AG04449 (cell line): ENCODE measurements at regions of chr2 and their contacts with region 1.

Region 1: DNA sequence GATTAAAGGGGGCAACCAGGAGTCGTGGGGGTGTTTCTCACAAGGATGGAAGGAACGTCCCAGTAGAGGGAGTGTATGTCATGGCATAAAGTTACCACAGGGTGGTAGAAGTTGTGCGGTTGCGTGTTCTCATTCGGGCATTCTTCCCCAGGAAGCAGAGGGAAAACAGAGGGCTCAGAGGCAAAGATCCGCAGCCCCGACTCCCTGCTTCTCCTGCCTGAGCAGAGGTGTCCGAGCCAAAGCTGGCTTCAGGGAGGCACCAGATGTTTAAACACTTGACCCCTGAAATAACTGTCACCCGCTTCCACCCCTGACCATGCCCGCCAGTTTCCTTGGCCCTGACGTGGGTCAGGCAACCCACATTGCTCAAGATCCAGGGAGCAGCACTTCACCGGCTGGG is 83.7 kb downstream of the EN1 start:
- DNase-seq: no peak
- H3K4me3 ChIP-seq: no peak overlapping the region; the same call in 1 of the 2 replicates
- CTCF ChIP-seq: peak; percentile 67

Region 2: DNA sequence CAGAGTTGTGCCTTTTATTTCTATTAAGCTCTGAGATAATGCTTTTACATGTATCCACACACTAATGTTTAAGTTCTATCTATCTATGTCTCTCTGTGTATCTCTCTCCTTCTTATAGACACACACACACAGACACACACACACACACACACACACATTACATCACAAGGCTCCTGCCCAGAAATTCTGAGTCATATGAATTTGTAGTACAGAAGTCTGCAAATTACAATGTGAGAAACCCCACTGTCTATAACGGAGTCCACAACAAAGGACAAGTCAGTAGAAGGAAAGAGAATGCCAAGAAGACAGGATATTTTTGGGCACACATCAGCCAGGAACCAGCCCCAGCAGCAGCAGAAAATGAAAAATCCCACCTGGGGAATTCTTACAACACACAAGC is 58.8 kb before region 1 on chr2:
- CTCF ChIA-PET with region 1: no interaction called
- POLR2A ChIA-PET with region 1: no interaction called
- DNase-seq: peak; percentile 60
- H3K4me3 ChIP-seq: no peak overlapping the region
- CTCF ChIP-seq: no peak

Region 3: GRCh38 chr2:118750959-118751565 is 12.7 kb before region 1 on chr2:
- CTCF ChIA-PET with region 1: interaction called, 34 read pairs
- POLR2A ChIA-PET with region 1: no interaction called
- DNase-seq: no peak
- H3K4me3 ChIP-seq: no peak overlapping the region
- CTCF ChIP-seq: no peak

Region 4: DNA sequence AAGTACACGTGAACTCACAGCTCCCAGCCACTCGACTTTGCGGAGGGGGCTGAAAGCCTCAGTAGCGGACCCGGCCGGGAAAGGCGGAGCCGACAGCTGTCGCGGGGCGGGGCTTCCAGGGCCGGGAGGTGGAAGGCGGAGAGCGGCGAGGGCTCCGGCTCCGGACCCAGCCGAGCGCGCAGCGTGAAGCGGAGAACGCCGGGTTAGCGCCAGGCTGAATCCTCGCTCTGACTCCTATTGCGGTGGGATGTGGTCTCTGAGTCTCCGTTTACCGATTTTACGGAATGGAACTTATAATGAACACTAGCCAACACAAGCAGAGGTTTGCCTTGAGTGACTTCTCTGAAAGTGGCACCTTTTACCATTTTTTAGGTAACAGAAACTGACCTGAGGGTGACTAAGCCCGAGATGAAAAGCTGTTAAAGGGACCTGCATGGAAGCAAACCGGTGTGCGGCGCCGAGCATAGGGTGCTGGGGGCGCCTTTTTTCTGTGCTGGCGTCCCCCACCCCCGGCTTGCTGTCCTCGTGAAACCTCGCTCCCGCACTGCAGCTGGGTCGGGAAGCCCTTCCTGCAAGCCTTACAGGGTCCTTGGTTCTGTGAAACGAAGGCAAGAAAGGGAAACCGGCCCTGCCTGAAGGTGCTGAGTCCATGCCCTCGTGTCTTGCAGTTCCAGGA is 10.8 kb after region 1 on chr2:
- CTCF ChIA-PET with region 1: interaction called, 12 read pairs
- POLR2A ChIA-PET with region 1: no interaction called
- DNase-seq: no peak
- H3K4me3 ChIP-seq: peak overlapping the region; percentile 64
- CTCF ChIP-seq: no peak

Region 5: DNA sequence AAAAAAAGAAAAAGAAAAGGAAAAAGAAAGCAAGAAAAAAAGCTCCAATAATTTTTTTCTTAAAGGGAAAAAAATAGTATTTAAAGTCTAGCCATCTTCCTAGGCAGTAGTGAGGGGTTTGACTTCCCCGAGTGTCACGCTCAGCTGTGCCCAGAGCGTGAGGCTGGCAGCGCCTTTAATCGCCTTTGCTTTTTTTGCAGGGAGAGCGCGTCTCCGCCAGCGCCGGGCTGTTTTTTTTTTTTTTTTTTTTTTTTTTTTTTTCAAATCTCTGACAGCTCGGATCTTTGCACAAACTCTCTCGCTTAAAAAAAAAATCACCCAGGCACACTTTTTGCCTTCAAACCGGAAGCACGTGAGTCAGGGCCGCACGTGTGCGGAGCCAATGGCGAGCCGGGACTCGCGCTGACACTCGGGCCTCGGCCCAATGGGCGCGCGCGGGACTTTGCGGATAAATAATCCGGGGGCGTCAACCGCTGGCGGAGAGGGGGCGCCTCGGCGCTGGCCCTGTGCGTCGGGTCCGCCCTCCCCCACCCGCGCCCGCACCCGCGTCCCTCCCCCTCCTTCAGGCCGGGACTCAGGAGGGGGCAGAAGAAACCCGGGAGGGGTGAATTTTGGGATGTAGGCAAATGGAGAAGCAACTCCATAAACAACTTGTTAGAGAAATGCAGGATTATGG is 83.8 kb after region 1 on chr2 and contains the start of gene EN1:
- CTCF ChIA-PET with region 1: interaction called, 82 read pairs
- POLR2A ChIA-PET with region 1: no interaction called
- DNase-seq: peak; percentile 74
- H3K4me3 ChIP-seq: peak within 1 kb of the TSS; percentile 92
- CTCF ChIP-seq: no peak

Region 6: DNA sequence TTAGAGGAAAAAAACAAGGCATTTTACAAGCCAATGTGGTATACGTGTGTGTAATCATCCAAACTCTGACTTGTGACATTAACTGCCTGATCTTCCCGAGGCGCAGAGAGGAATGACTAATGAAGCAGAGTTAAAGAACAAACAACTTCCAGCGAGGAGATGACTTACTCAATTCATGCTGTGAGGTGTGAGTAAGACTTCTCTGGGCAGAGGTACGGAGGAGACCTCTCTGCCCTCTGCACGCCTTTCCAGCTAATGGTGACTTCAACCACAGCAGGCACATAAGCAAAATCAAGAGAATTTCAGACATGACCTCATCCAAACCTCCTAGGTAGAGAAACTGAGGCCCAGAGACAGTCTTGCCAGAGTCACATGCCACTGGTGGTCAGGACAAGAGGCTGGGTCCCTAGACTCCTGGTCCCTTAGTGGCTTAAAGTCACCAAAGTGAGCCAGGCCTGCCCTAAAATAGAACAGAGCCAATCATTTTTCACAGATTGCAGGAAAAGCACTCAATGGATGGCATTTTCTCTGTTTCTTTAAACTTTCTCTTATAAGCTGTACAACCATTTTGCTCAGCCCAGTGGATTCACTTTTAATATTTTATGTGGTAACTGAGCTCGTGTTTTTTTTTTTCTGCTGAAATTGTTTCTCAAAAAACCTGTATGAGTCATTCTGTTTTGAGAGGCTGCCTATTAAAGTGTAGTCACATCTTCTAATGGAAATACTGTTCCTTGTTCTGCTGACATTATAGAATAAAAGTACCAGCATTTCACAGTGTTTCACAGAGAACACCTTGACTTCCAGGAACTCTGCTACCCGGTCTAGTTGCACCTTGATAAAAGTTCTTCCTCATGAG is 489.3 kb after region 1 on chr2:
- CTCF ChIA-PET with region 1: no interaction called
- POLR2A ChIA-PET with region 1: no interaction called
- DNase-seq: peak; percentile 90
- H3K4me3 ChIP-seq: no peak overlapping the region
- CTCF ChIP-seq: no peak